A673 (cell line): ENCODE measurements at regions of chrX and their contacts with region 1.

Region 1: DNA sequence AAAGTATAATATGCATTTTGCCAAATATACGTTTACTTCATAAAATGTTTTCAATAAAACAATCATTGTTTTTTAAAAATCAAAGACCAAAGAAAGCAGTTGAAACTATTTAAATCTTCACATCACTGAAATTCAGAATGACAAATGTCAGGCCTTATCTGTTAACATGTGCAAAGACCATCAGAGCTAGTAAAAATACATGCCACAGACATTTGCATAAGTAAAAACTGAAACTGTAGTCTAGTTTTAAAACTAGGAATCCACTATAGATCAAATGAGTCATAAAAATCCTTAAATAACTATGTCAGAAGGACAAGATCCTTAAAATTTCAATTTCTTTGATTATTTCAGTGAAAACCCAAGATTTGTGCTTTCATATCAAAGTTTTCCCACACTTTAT is 24.8 kb downstream of the KLHL15 start:
- DNase-seq: no peak
- H3K4me3 ChIP-seq: no peak overlapping the region
- H3K27ac ChIP-seq: no peak overlapping the region
- H3K4me1 ChIP-seq: no peaks in the 10 kb centered on the region
- H3K27me3 ChIP-seq: no peaks in the 10 kb centered on the region
- CTCF ChIP-seq: no peak

Region 2: GRCh38 chrX:24081661-24082264 is 79.6 kb after region 1 on chrX:
- CTCF ChIA-PET with region 1: interaction called, 10 read pairs
- POLR2A ChIA-PET with region 1: no interaction called
- intact Hi-C with region 1: no loop called
- DNase-seq: peak; percentile 72
- H3K4me3 ChIP-seq: peak overlapping the region; percentile 34
- H3K27ac ChIP-seq: no peak overlapping the region
- H3K4me1 ChIP-seq: no peaks in the 10 kb centered on the region
- H3K27me3 ChIP-seq: no peaks in the 10 kb centered on the region
- CTCF ChIP-seq: peak; percentile 78